ENCODE measurements at regions of chr14 and their contacts with region 1.

Region 1: DNA sequence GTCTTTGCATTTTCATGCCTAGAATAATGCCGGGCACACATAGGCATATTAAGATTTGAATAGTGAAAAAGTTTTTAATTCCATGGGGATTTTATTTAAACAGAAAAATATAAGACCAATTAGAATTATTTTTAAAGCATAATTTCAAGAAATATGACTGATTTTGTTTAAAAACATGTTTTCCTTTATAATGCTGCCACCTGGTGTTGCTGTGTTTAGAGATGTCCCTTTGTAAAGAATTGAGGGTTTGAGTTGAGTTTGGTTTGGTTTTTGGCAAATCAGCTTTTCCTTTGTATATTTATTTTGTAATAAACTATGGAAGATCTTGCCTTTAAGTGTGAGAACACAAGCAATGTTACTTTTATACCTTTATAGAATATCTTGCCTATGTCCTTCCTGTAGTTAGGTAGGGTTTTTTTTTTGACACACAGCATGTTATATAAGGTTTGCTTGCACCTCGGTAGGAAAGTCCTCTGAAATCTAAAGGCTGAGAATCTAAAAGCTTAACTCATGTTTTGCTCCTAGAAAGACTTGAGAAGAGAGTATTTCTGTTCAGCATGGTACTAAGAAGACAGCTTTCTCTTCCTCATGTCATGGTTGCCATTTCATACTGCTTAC is 31.4 kb upstream of the SNAPC1 start:
- DNase-seq: no peak
- CTCF ChIP-seq: peak; percentile 42

Region 2: DNA sequence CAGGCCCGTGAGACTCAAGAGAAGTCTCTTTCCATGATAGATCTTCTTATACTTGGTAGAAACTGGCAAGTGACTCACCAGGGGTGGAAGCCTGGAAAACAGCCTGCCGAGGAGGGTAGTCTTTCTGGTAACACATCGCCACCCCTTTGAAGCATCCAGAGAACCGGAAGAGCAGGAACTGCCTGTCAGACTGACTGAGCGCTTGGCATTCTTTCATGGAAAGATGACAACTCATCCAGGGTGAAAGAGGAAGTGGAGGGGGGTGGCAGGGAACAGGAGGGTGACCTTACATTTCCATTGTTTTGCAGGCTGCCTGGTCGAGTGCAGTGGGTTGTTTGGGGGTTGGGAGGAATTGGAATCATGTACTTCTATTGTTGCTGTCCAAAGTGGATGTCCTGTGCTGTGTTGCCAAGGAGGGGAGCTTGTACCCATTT is 375.0 kb before region 1 on chr14:
- CTCF ChIA-PET with region 1: no interaction called
- POLR2A ChIA-PET with region 1: no interaction called
- DNase-seq: no peak
- CTCF ChIP-seq: no peak

Region 3: GRCh38 chr14:61456720-61457119 is 274.1 kb before region 1 on chr14:
- CTCF ChIA-PET with region 1: interaction called, 11 read pairs
- POLR2A ChIA-PET with region 1: no interaction called
- DNase-seq: peak; percentile 75
- CTCF ChIP-seq: peak; percentile 77

Region 4: GRCh38 chr14:61719344-61720293 is 11.2 kb before region 1 on chr14:
- CTCF ChIA-PET with region 1: interaction called, 10 read pairs
- POLR2A ChIA-PET with region 1: no interaction called
- DNase-seq: no peak
- CTCF ChIP-seq: no peak

Measured in GM10248 (cell line).